MCF 10A (cell line): ENCODE measurements at regions of chr5 and their contacts with region 1.

Region 1: GRCh38 chr5:10987930-10988504 is 227.0 kb upstream of the DAP start:
- DNase-seq: peak; percentile 70
- H3K4me3 Mint-ChIP-seq: no peak overlapping the region
- H3K27ac Mint-ChIP-seq: no peak overlapping the region
- H3K4me1 Mint-ChIP-seq: peaks cover 5% of the 10 kb centered on the region
- H3K27me3 Mint-ChIP-seq: peaks cover 65% of the 10 kb centered on the region
- CTCF ChIP-seq: peak; percentile 68

Region 2: GRCh38 chr5:11009576-11009975 is 21.6 kb after region 1 on chr5:
- CTCF ChIA-PET with region 1: no interaction called
- POLR2A ChIA-PET with region 1: no interaction called
- intact Hi-C with region 1: no loop called
- DNase-seq: no peak
- H3K4me3 Mint-ChIP-seq: no peak overlapping the region
- H3K27ac Mint-ChIP-seq: no peak overlapping the region
- H3K4me1 Mint-ChIP-seq: no peaks in the 10 kb centered on the region
- H3K27me3 Mint-ChIP-seq: peaks cover 42% of the 10 kb centered on the region
- CTCF ChIP-seq: no peak

Region 3: DNA sequence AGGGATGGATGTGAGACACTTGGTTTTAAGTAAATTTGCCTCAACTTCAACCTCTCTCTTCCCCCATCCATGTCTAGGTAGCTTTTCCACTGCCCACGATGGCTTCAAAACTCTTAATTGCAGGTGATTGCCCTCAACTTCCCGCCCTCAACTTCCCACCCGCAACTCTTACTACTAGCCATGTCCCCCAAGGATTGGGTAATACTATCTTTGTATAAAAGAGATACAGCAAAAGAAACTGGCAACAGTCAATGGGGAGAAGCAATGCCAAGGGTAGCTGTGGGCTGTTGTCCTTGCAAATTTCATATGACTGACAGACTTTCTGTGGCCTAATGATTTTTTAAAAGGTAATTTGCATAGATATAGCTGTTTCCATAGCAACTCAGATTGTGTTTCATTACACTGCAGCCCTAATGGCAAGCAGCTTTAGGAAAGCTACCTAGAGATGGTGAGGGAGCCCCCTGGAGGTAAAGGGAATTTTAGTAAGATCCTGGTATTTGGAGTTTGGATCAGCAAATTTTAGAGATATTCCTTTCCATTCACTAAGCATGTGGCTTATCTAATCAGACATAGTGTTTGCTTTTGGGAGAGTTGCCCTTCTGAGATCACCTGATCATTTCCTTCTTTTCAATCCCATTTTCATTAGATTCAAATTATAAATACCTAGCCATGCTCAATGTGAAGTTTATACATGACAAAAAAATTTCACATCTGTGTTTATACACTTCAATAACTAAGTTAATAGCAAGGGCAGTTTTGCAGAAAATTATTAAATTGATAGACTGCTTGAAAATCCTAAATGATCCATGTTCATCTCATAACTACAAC is 194.6 kb after region 1 on chr5:
- CTCF ChIA-PET with region 1: interaction called, 3 read pairs
- POLR2A ChIA-PET with region 1: no interaction called
- intact Hi-C with region 1: loop called (anchors 1 kb)
- DNase-seq: peak; percentile 50
- H3K4me3 Mint-ChIP-seq: no peak overlapping the region
- H3K27ac Mint-ChIP-seq: no peak overlapping the region
- H3K4me1 Mint-ChIP-seq: no peaks in the 10 kb centered on the region
- H3K27me3 Mint-ChIP-seq: no peaks in the 10 kb centered on the region
- CTCF ChIP-seq: peak; percentile 47

Region 4: GRCh38 chr5:11494340-11494739 is 506.3 kb after region 1 on chr5:
- CTCF ChIA-PET with region 1: interaction called, 4 read pairs
- POLR2A ChIA-PET with region 1: no interaction called
- intact Hi-C with region 1: loop called (anchors 5 kb)
- DNase-seq: no peak
- H3K4me3 Mint-ChIP-seq: no peak overlapping the region
- H3K27ac Mint-ChIP-seq: no peak overlapping the region
- H3K4me1 Mint-ChIP-seq: no peaks in the 10 kb centered on the region
- H3K27me3 Mint-ChIP-seq: peaks cover 20% of the 10 kb centered on the region
- CTCF ChIP-seq: peak; percentile 46